ENCODE measurements at regions of chr1 and their contacts with region 1.

Region 1: GRCh38 chr1:243798726-243799125 is 51.3 kb downstream of the AKT3 start:
- DNase-seq: no peak
- ATAC-seq: no peak
- H3K4me3 ChIP-seq: no peak overlapping the region
- H3K4me3 Mint-ChIP-seq: no peak overlapping the region
- H3K27ac ChIP-seq: no peak overlapping the region
- H3K27ac Mint-ChIP-seq: peak overlapping the region in 1 of 2 donors; percentile 35
- H3K4me1 ChIP-seq: peaks cover 3 to 4% of the 10 kb centered on the region in 2 experiments
- H3K4me1 Mint-ChIP-seq: peaks cover 47 to 68% (median 63%) of the 10 kb centered on the region in 3 donors
- H3K27me3 ChIP-seq: no peaks in the 10 kb centered on the region
- H3K27me3 Mint-ChIP-seq: no peaks in the 10 kb centered on the region

Region 2: DNA sequence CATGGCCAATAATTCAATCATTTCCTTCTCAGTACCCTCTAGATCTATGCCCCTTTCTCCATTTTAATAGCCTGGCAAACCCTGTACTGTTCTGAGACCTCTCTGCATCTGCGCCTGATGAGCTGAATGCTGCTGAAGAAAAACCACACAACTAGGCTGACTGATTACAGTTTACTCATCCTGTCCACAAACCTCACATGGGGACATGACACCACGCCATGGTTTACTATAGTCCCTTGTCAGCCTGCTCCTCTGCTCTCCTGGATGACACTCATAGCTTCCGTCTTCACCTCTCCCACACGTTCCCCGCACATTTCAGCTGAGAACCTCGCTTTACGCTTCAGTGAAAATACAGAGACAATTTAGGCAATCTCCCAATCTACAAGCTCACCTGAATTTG is 913.9 kb after region 1 on chr1:
- CTCF ChIA-PET with region 1: no interaction called
- POLR2A ChIA-PET with region 1: interaction called in 1 of 2 experiments, 10 read pairs
- DNase-seq: no peak
- ATAC-seq: no peak
- H3K4me3 ChIP-seq: no peak overlapping the region
- H3K4me3 Mint-ChIP-seq: no peak overlapping the region
- H3K27ac ChIP-seq: no peak overlapping the region
- H3K27ac Mint-ChIP-seq: no peak overlapping the region
- H3K4me1 ChIP-seq: no peaks in the 10 kb centered on the region
- H3K4me1 Mint-ChIP-seq: peaks cover 0 to 3% (median 0%) of the 10 kb centered on the region in 3 donors
- H3K27me3 ChIP-seq: no peaks in the 10 kb centered on the region
- H3K27me3 Mint-ChIP-seq: no peaks in the 10 kb centered on the region

Measured in T-cell (primary cell).